ENCODE measurements at regions of chrX and their contacts with region 1.

Region 1: GRCh38 chrX:48945516-48946348 is 11.7 kb downstream of the OTUD5 start:
- DNase-seq: peak; percentile 68
- H3K4me3 ChIP-seq: no peak overlapping the region
- H3K27ac ChIP-seq: no peak overlapping the region
- H3K4me1 ChIP-seq: no peaks in the 10 kb centered on the region
- H3K27me3 ChIP-seq: no peaks in the 10 kb centered on the region

Region 2: GRCh38 chrX:49043220-49043986 is 97.7 kb after region 1 on chrX and contains the start of gene TFE3:
- in situ Hi-C with region 1: loop called (anchors 25 kb)
- DNase-seq: peak; percentile 97
- H3K4me3 ChIP-seq: peak within 1 kb of the TSS; percentile 91
- H3K27ac ChIP-seq: peak within 1 kb of the TSS; percentile 91
- H3K4me1 ChIP-seq: peaks cover 5% of the 10 kb centered on the region; the same call in 1 of the 2 replicates
- H3K27me3 ChIP-seq: no peaks in the 10 kb centered on the region
- total RNA-seq, gene TFE3: 72.5 and 85.6 TPM in 2 replicates

Region 3: GRCh38 chrX:49129427-49129826 is 183.7 kb after region 1 on chrX:
- in situ Hi-C with region 1: no loop called
- DNase-seq: no peak
- H3K4me3 ChIP-seq: no peak overlapping the region
- H3K27ac ChIP-seq: no peak overlapping the region
- H3K4me1 ChIP-seq: no peaks in the 10 kb centered on the region
- H3K27me3 ChIP-seq: no peaks in the 10 kb centered on the region